CD8-positive, alpha-beta T cell (primary cell): ENCODE measurements at regions of chr11 and their contacts with region 1.

Region 1: GRCh38 chr11:43282607-43283440 is 29.0 kb upstream of the API5 start:
- DNase-seq: peak; percentile 1 to 55 (median 36)
- ATAC-seq: no peak
- H3K4me3 ChIP-seq: no peak overlapping the region
- H3K4me3 Mint-ChIP-seq: no peak overlapping the region
- H3K27ac ChIP-seq: no peak overlapping the region
- H3K27ac Mint-ChIP-seq: no peak overlapping the region
- H3K4me1 ChIP-seq: no peaks in the 10 kb centered on the region
- H3K4me1 Mint-ChIP-seq: no peaks in the 10 kb centered on the region
- H3K27me3 ChIP-seq: no peaks in the 10 kb centered on the region
- H3K27me3 Mint-ChIP-seq: peaks cover 22% of the 10 kb centered on the region
- CTCF ChIP-seq: peak; percentile 79

Region 2: DNA sequence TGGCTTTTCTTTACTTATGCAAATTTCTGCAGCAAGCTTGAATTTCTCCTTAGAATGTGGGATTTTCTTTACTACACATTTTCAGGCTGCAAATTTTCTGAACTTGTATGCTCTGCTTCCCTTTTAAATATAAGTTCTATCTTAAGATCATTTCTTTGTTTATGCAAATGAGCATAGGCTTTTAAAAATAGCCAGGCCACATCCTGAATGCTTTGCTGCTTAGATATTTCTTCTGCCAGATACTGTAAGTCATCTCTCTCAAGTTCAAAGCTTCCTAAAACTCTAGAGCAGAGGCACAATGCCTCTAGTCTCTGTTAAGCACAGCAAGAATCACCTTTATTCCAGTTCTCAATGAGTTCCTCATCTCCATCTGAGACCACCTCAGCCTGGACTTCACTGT is 1137.5 kb before region 1 on chr11:
- CTCF ChIA-PET with region 1: no interaction called
- POLR2A ChIA-PET with region 1: no interaction called
- intact Hi-C with region 1: no loop called
- DNase-seq: no peak
- ATAC-seq: no peak
- H3K4me3 ChIP-seq: no peak overlapping the region
- H3K4me3 Mint-ChIP-seq: no peak overlapping the region
- H3K27ac ChIP-seq: no peak overlapping the region
- H3K27ac Mint-ChIP-seq: no peak overlapping the region
- H3K4me1 ChIP-seq: no peaks in the 10 kb centered on the region
- H3K4me1 Mint-ChIP-seq: no peaks in the 10 kb centered on the region
- H3K27me3 ChIP-seq: no peaks in the 10 kb centered on the region
- H3K27me3 Mint-ChIP-seq: no peaks in the 10 kb centered on the region
- CTCF ChIP-seq: no peak

Region 3: DNA sequence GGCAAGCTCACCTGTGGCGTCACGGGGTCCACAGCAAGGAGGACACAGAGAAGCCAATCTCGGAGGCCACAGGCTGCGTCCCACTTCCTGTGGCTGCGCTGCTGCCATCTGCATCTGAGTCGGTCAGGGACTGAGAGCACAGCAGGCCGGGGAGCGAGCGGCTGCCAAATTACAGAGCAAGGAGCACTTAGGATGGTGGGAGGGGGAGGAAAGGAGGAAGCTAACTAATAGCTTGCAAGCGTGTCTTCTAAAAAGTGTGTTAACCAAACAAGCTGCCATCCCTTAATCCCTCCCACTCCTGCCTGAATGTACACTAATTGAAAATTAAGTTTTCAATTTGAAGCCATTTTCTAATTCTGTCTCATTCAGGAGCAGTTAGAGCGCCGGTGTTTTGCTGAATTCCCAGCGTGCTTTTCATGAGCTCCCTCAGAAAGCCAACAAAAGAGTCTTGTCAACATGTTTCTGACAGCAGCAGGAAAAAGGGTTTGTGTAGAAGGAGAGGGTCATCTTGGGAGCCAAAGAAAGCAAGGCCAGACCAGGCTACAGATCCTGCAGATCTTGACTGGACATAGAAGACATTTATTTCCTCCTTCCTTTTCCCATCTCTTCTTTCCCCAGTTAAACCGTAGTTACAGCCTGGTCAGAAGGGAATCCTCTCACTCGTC is 13.4 kb before region 1 on chr11:
- CTCF ChIA-PET with region 1: interaction called, 11 read pairs
- POLR2A ChIA-PET with region 1: no interaction called
- intact Hi-C with region 1: no loop called
- DNase-seq: no peak
- ATAC-seq: no peak
- H3K4me3 ChIP-seq: no peak overlapping the region
- H3K4me3 Mint-ChIP-seq: no peak overlapping the region
- H3K27ac ChIP-seq: no peak overlapping the region
- H3K27ac Mint-ChIP-seq: no peak overlapping the region
- H3K4me1 ChIP-seq: no peaks in the 10 kb centered on the region
- H3K4me1 Mint-ChIP-seq: no peaks in the 10 kb centered on the region
- H3K27me3 ChIP-seq: peaks cover 0 to 2% of the 10 kb centered on the region in 2 experiments
- H3K27me3 Mint-ChIP-seq: peaks cover 6% of the 10 kb centered on the region
- CTCF ChIP-seq: no peak

Region 4: GRCh38 chr11:43298397-43298796 is 15.6 kb after region 1 on chr11:
- CTCF ChIA-PET with region 1: interaction called, 17 read pairs
- POLR2A ChIA-PET with region 1: no interaction called
- intact Hi-C with region 1: no loop called
- DNase-seq: no peak
- ATAC-seq: no peak
- H3K4me3 ChIP-seq: no peak overlapping the region
- H3K4me3 Mint-ChIP-seq: no peak overlapping the region
- H3K27ac ChIP-seq: no peak overlapping the region
- H3K27ac Mint-ChIP-seq: no peak overlapping the region
- H3K4me1 ChIP-seq: no peaks in the 10 kb centered on the region
- H3K4me1 Mint-ChIP-seq: no peaks in the 10 kb centered on the region
- H3K27me3 ChIP-seq: no peaks in the 10 kb centered on the region
- H3K27me3 Mint-ChIP-seq: peaks cover 22% of the 10 kb centered on the region
- CTCF ChIP-seq: no peak